ENCODE measurements at regions of chr1 and their contacts with region 1.

Region 1: DNA sequence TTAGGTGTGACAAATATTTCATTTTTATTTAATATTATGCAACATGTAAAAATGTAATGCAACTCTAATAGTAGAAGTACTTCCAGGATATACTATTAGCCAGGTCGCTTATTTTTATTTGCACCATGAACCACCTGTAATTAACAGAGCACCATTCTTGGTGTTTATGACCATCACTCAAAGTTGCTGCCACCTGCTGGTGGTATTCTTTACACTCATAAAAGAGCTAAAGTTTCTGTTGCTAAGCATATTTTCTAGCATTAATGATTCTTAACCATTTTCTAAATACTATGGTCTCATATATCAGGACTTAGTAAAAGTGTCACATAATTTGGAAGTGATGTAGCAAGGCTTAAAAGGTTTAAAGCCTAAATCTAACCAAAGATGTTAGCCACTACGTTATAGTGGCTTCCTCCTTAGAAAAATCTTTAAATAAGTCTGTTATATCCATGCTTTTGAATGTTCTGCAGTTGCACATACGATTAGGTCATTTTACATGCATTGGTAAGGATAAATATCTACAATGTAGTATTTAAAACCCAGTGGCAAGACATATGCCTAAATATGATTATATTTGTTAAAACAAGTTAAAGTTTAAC is 244.5 kb downstream of the NEGR1 start:
- DNase-seq: peak; percentile 17
- ATAC-seq: no peak

Region 2: GRCh38 chr1:71587961-71588360 is 449.9 kb before region 1 on chr1:
- intact Hi-C with region 1: loop called (anchors 2 to 5 kb)
- DNase-seq: no peak
- ATAC-seq: peak; percentile 42 to 63

Region 3: GRCh38 chr1:71979882-71980281 is 58.0 kb before region 1 on chr1:
- intact Hi-C with region 1: loop called in 1 of 2 experiments (anchors 10 kb)
- DNase-seq: no peak
- ATAC-seq: no peak

Region 4: GRCh38 chr1:72197786-72198185 is 159.9 kb after region 1 on chr1:
- intact Hi-C with region 1: no loop called
- DNase-seq: no peak
- ATAC-seq: no peak